OCI-LY7 (cell line): ENCODE measurements at regions of chr12 and their contacts with region 1.

Region 1: GRCh38 chr12:56224102-56224701 is at the start of gene NABP2:
- DNase-seq: peak; percentile 98
- H3K4me3 ChIP-seq: peak within 1 kb of the TSS; percentile 83
- H3K27ac ChIP-seq: peak within 1 kb of the TSS; percentile 41
- H3K4me1 ChIP-seq: peaks cover 40% of the 10 kb centered on the region
- CTCF ChIP-seq: peak; percentile 96
- total RNA-seq, gene NABP2: 37.5 and 46.0 TPM in 2 replicates

Region 2: GRCh38 chr12:56127888-56128669 is 96.1 kb before region 1 on chr12 and contains the start of gene ESYT1:
- CTCF ChIA-PET with region 1: interaction called, 3 read pairs
- POLR2A ChIA-PET with region 1: interaction called, 4 read pairs
- intact Hi-C with region 1: loop called (anchors 1 kb)
- DNase-seq: peak; percentile 100
- H3K4me3 ChIP-seq: peak within 1 kb of the TSS; percentile 83
- H3K27ac ChIP-seq: peak within 1 kb of the TSS; percentile 96
- H3K4me1 ChIP-seq: peaks cover 48% of the 10 kb centered on the region
- CTCF ChIP-seq: no peak
- total RNA-seq, gene ESYT1: 74.6 and 85.9 TPM in 2 replicates

Region 3: GRCh38 chr12:56198836-56199235 is 25.4 kb before region 1 on chr12:
- CTCF ChIA-PET with region 1: interaction called, 7 read pairs
- POLR2A ChIA-PET with region 1: interaction called, 23 read pairs
- intact Hi-C with region 1: no loop called
- DNase-seq: no peak
- H3K4me3 ChIP-seq: no peak overlapping the region
- H3K27ac ChIP-seq: no peak overlapping the region
- H3K4me1 ChIP-seq: no peaks in the 10 kb centered on the region
- CTCF ChIP-seq: no peak

Region 4: DNA sequence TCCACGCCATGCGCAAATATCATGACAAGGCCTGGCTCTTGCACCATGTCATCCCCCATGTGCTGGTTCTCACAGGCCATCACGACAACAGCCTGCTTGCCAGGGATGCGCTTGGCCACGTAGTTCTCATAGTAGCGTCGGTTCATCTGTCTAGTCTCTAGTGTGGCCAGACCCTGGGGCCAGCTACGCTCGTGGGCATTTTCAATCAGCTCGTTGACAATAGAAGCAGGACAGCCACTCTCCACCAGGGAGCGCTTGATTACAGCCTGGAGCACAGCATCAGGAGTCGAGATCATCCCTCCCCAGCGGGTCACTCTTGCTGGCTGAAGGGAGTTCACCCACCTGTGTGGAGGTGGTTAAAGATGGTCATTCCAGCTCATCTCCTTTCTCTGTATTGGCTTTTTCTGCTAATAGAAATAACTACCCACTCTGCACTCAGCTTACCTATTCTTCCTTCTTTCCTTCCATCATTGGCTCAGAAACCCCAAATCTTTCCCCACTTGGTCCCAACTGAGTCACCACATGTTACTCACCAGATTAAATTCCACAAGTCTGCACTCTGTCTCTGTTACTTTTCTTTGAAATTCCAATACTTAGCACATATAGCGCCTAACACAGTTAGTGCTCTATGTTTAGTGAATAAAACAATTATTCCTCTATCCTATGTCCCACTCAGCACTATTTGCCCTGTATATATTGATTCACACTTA is 17.6 kb before region 1 on chr12:
- CTCF ChIA-PET with region 1: interaction called, 35 read pairs
- POLR2A ChIA-PET with region 1: interaction called, 85 read pairs
- intact Hi-C with region 1: loop called (anchors 1 kb)
- DNase-seq: peak; percentile 66
- H3K4me3 ChIP-seq: no peak overlapping the region
- H3K27ac ChIP-seq: peak overlapping the region; percentile 94
- H3K4me1 ChIP-seq: peaks cover 42% of the 10 kb centered on the region
- CTCF ChIP-seq: peak; percentile 78